ENCODE measurements at regions of chr9 and their contacts with region 1.

Region 1: GRCh38 chr9:98851730-98852459 is 44.4 kb downstream of the GALNT12 start:
- DNase-seq: no peak
- H3K4me3 ChIP-seq: no peak overlapping the region
- H3K27ac ChIP-seq: no peak overlapping the region
- H3K4me1 ChIP-seq: no peaks in the 10 kb centered on the region
- H3K27me3 ChIP-seq: no peaks in the 10 kb centered on the region
- CTCF ChIP-seq: no peak
- POLR2A ChIP-seq: no peak

Region 2: DNA sequence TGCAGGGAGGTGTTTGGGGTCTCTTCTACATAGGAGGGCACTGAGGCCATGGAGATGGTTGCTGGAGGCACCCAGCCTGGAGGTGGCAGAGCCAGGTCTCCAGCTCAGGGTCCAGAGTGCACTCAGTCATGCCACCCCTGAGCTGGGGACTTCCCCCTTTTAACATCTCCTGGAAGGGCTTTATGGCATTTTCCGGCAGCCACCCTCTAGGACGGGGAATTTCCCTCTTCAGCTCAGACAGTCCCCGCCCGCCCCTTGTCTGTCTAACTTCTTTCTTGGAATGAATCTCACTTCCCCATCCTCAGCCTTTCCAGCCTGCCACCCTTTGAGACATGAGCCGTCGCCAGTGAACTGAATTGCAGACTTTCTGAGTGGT is 141.7 kb after region 1 on chr9:
- intact Hi-C with region 1: loop called (anchors 5 kb)
- DNase-seq: peak; percentile 81 to 83
- H3K4me3 ChIP-seq: no peak overlapping the region
- H3K27ac ChIP-seq: no peak overlapping the region
- H3K4me1 ChIP-seq: peaks cover 49% of the 10 kb centered on the region
- H3K27me3 ChIP-seq: no peaks in the 10 kb centered on the region
- CTCF ChIP-seq: no peak
- POLR2A ChIP-seq: no peak

Region 3: GRCh38 chr9:99173570-99174504 is 321.9 kb after region 1 on chr9:
- intact Hi-C with region 1: no loop called
- DNase-seq: no peak
- H3K4me3 ChIP-seq: no peak overlapping the region
- H3K27ac ChIP-seq: no peak overlapping the region
- H3K4me1 ChIP-seq: no peaks in the 10 kb centered on the region
- H3K27me3 ChIP-seq: no peaks in the 10 kb centered on the region
- CTCF ChIP-seq: no peak
- POLR2A ChIP-seq: no peak

Measured in vagina (tissue), 2 donors.